PC-3 (cell line): ENCODE measurements at regions of chr14 and their contacts with region 1.

Region 1: GRCh38 chr14:44912041-44912869 is 49.5 kb downstream of the KLHL28 start:
- DNase-seq: no peak
- ATAC-seq: no peak
- H3K4me3 ChIP-seq: no peak overlapping the region
- H3K27ac ChIP-seq: no peak overlapping the region
- H3K4me1 ChIP-seq: 0 out of 2 replicates have a peak, but pooled peaks cover 4% of the 10 kb centered on the region
- H3K27me3 ChIP-seq: no peaks in the 10 kb centered on the region
- CTCF ChIP-seq: no peak

Region 2: DNA sequence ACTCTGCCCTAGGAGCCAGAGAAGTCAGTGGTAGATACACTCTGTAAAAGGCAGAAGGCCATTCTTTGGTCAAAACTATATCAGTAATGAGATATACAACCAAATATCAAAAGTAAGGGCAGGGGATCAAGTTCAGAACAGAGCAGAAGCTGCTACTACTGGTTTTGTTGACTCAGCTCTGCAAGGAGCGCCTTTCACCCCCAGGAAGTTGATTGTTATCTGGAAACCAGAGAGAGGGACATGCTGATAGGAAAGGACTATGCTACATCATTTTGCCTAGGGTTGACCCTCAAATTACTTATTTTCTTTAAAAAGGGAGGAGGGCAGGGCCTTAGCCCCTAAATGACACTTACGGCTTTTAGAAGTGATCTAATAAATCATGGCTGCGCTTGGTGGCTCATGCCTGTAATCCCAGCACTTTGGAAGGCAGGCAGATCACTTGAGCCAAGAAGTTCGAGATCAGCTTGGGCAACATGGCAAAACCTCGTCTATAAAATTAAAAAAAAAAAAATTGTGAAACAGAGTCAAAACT is 144.5 kb before region 1 on chr14:
- CTCF ChIA-PET with region 1: no interaction called
- POLR2A ChIA-PET with region 1: no interaction called
- intact Hi-C with region 1: no loop called
- DNase-seq: peak; percentile 13
- ATAC-seq: no peak
- H3K4me3 ChIP-seq: no peak overlapping the region
- H3K27ac ChIP-seq: no peak overlapping the region
- H3K4me1 ChIP-seq: peaks cover 6% of the 10 kb centered on the region
- H3K27me3 ChIP-seq: no peaks in the 10 kb centered on the region
- CTCF ChIP-seq: no peak

Region 3: GRCh38 chr14:45112889-45113781 is 200.9 kb after region 1 on chr14:
- CTCF ChIA-PET with region 1: no interaction called
- POLR2A ChIA-PET with region 1: no interaction called
- intact Hi-C with region 1: loop called (anchors 1 kb)
- DNase-seq: peak; percentile 88
- ATAC-seq: peak; percentile 95
- H3K4me3 ChIP-seq: peak overlapping the region; percentile 6; the same call in 1 of the 2 replicates
- H3K27ac ChIP-seq: peak overlapping the region; percentile 49
- H3K4me1 ChIP-seq: peaks cover 24% of the 10 kb centered on the region
- H3K27me3 ChIP-seq: no peaks in the 10 kb centered on the region
- CTCF ChIP-seq: no peak

Region 4: GRCh38 chr14:45201905-45202304 is 289.6 kb after region 1 on chr14:
- CTCF ChIA-PET with region 1: no interaction called
- POLR2A ChIA-PET with region 1: no interaction called
- intact Hi-C with region 1: loop called (anchors 1 kb)
- DNase-seq: peak; percentile 13
- ATAC-seq: peak; percentile 92
- H3K4me3 ChIP-seq: no peak overlapping the region
- H3K27ac ChIP-seq: no peak overlapping the region
- H3K4me1 ChIP-seq: no peaks in the 10 kb centered on the region
- H3K27me3 ChIP-seq: no peaks in the 10 kb centered on the region
- CTCF ChIP-seq: peak; percentile 37; the same call in 1 of the 2 replicates

Region 5: GRCh38 chr14:45253068-45253753 is 341.0 kb after region 1 on chr14 and contains the start of gene MIS18BP1:
- CTCF ChIA-PET with region 1: interaction called, 3 read pairs
- POLR2A ChIA-PET with region 1: no interaction called
- intact Hi-C with region 1: loop called (anchors 5 kb)
- DNase-seq: peak; percentile 97
- ATAC-seq: peak; percentile 92
- H3K4me3 ChIP-seq: peak within 1 kb of the TSS; percentile 71
- H3K27ac ChIP-seq: peak within 1 kb of the TSS; percentile 84
- H3K4me1 ChIP-seq: peaks cover 23% of the 10 kb centered on the region
- H3K27me3 ChIP-seq: no peaks in the 10 kb centered on the region
- CTCF ChIP-seq: peak; percentile 82
- total RNA-seq, gene MIS18BP1: 39.3 and 42.3 TPM in 2 replicates

Region 6: GRCh38 chr14:45267071-45267470 is 354.8 kb after region 1 on chr14:
- CTCF ChIA-PET with region 1: interaction called, 9 read pairs
- POLR2A ChIA-PET with region 1: no interaction called
- intact Hi-C with region 1: loop called (anchors 1 kb)
- DNase-seq: no peak
- ATAC-seq: no peak
- H3K4me3 ChIP-seq: no peak overlapping the region
- H3K27ac ChIP-seq: no peak overlapping the region
- H3K4me1 ChIP-seq: no peaks in the 10 kb centered on the region
- H3K27me3 ChIP-seq: no peaks in the 10 kb centered on the region
- CTCF ChIP-seq: no peak